ENCODE measurements at regions of chr12 and their contacts with region 1.

Region 1: GRCh38 chr12:92145731-92146496 is at the start of gene BTG1:
- DNase-seq: peak; percentile 99
- H3K4me3 ChIP-seq: peak within 1 kb of the TSS; percentile 96
- H3K27ac ChIP-seq: peak within 1 kb of the TSS; percentile 93
- H3K4me1 ChIP-seq: peaks cover 33% of the 10 kb centered on the region
- H3K27me3 ChIP-seq: no peaks in the 10 kb centered on the region
- CTCF ChIP-seq: no peak
- total RNA-seq, gene BTG1: 18.0 and 23.2 TPM in 2 replicates

Region 2: DNA sequence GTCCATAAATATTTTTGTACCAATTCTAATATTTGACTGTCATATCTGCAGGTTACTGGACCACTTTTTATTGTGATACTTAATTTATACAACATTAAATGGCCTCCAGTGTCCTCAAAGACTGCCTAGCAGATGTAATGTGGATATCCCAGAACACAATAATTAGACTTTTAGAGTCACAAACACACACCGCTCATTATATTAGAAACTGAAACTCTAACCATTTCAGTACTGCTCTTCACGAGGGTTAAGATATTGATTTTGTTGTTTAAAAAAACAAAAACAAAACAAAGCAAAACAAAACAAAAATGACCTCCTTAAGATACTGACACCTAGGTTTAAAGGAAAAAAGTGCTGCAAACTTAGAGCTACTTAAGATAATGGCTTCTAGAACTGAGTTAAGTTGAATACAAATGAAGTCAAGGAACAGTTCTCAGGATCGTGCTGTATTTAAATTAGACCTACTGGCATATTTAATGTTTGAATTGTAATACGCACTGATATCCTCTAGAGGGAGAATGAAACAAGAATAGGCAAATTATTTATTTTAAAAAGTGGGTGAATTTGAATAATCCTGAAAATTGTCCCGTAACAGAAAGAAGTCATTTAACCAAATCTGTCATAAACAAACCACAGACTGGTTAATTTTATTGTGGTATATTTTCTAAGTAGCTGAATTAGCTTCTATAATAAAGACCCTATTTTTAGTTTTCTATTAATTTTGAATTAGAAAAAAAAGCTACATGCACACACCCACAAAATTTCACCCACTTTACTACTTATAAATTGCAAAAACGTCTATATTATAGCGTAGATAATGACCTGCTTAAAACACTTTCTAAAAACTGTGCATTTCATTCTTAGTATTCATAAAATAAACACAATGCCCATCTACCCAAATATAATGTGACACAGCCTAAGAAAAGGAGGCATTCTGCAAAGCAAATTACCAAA is 568.1 kb before region 1 on chr12:
- CTCF ChIA-PET with region 1: no interaction called
- POLR2A ChIA-PET with region 1: no interaction called
- intact Hi-C with region 1: loop called (anchors 2 kb)
- DNase-seq: peak; percentile 39
- H3K4me3 ChIP-seq: no peak overlapping the region
- H3K27ac ChIP-seq: no peak overlapping the region
- H3K4me1 ChIP-seq: peaks cover 28% of the 10 kb centered on the region
- H3K27me3 ChIP-seq: peaks cover 18% of the 10 kb centered on the region
- CTCF ChIP-seq: peak; percentile 68

Region 3: GRCh38 chr12:91947459-91947858 is 198.5 kb before region 1 on chr12:
- CTCF ChIA-PET with region 1: no interaction called
- POLR2A ChIA-PET with region 1: no interaction called
- intact Hi-C with region 1: no loop called
- DNase-seq: no peak
- H3K4me3 ChIP-seq: no peak overlapping the region
- H3K27ac ChIP-seq: no peak overlapping the region
- H3K4me1 ChIP-seq: no peaks in the 10 kb centered on the region
- H3K27me3 ChIP-seq: no peaks in the 10 kb centered on the region
- CTCF ChIP-seq: no peak

Region 4: GRCh38 chr12:92007787-92008186 is 138.1 kb before region 1 on chr12:
- CTCF ChIA-PET with region 1: no interaction called
- POLR2A ChIA-PET with region 1: no interaction called
- intact Hi-C with region 1: no loop called
- DNase-seq: no peak
- H3K4me3 ChIP-seq: no peak overlapping the region
- H3K27ac ChIP-seq: no peak overlapping the region
- H3K4me1 ChIP-seq: no peaks in the 10 kb centered on the region
- H3K27me3 ChIP-seq: no peaks in the 10 kb centered on the region
- CTCF ChIP-seq: no peak

Region 5: GRCh38 chr12:92034858-92035401 is 111.0 kb before region 1 on chr12:
- CTCF ChIA-PET with region 1: no interaction called
- POLR2A ChIA-PET with region 1: no interaction called
- intact Hi-C with region 1: loop called (anchors 5 kb)
- DNase-seq: peak; percentile 79
- H3K4me3 ChIP-seq: peak overlapping the region; percentile 11
- H3K27ac ChIP-seq: no peak overlapping the region
- H3K4me1 ChIP-seq: peaks cover 10% of the 10 kb centered on the region
- H3K27me3 ChIP-seq: no peaks in the 10 kb centered on the region
- CTCF ChIP-seq: no peak

Region 6: GRCh38 chr12:92259852-92260251 is 113.9 kb after region 1 on chr12:
- CTCF ChIA-PET with region 1: no interaction called
- POLR2A ChIA-PET with region 1: interaction called, 19 read pairs
- intact Hi-C with region 1: no loop called
- DNase-seq: no peak
- H3K4me3 ChIP-seq: no peak overlapping the region
- H3K27ac ChIP-seq: no peak overlapping the region
- H3K4me1 ChIP-seq: no peaks in the 10 kb centered on the region
- H3K27me3 ChIP-seq: no peaks in the 10 kb centered on the region
- CTCF ChIP-seq: no peak

Region 7: GRCh38 chr12:92624236-92624635 is 478.3 kb after region 1 on chr12:
- CTCF ChIA-PET with region 1: no interaction called
- POLR2A ChIA-PET with region 1: no interaction called
- intact Hi-C with region 1: no loop called
- DNase-seq: no peak
- H3K4me3 ChIP-seq: no peak overlapping the region
- H3K27ac ChIP-seq: no peak overlapping the region
- H3K4me1 ChIP-seq: no peaks in the 10 kb centered on the region
- H3K27me3 ChIP-seq: no peaks in the 10 kb centered on the region
- CTCF ChIP-seq: no peak